Right ventricle myocardium inferior (tissue), 1 donor: ENCODE measurements at regions of chr14 and their contacts with region 1.

Region 1: DNA sequence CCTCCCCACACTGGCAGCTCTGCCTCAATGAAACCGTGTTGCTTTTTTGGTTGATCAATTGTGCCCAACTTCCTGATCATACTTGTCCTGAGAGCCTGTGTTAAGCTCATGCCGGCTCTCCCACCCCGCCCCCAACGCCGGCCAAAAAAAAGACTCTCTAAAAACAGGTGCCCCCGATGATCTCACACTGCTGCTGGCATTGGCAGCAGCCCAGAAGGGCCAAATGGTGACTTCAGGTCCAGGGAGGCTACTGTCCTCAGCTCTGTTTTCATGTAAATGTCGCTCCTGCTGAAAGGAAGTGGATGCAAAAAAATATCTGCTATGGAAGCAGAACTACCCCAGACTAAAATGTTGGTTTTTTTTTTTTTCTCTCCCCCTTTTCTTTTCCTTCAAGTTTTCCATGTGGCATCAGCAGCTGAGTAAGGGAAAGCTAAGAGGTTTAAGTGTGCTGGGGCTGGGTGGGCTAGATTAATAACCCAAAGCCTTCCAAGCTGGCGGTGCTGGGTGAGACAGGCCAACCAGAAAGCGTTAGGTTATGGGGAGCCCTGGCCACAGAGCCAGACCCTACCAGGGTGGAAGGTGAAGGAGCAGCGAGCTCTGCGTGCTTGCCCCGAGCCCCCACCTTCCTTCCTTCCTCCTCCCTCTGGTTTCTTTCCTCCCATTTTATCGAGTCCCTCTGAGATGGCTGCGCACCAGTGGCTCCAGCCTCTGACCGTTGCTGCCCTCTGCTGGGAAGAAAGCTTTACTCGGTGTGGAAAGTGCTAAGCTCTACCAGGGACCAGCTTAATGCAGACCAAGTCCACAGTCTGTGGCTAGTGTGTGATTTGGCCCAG is 396.1 kb downstream of the NRXN3 start:
- DNase-seq: peak; percentile 66
- ATAC-seq: peak; percentile 85

Region 2: DNA sequence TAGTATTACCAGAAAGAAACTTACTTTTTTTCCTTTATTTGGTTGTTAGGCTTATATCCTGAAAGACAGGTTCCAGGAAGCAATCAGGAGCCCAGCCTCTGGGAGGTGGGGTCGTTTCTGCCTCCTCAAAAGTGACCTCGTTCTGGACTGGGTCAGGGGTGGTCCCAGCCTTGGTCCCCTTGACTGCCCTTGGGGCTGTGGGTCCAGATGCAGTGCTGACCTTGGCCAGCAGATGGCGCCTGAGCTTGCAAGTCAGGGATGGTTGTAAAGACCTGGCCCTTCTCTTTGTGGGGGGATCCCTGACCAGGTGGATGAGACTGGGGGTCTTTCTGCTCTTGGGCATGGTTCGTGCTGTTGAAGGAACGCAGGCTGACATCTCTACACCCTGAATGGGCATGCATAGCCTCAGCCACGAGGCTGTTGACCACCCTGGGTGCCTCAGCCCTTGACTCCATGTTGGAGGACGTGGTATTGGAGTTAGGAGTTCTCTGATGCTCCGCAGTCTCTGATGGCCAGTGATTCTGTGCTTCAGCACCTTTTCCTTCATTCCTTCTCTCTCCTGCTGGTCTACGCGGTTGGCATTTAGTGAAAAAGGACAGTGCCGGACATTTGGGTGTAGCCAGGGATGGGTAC is 704.0 kb before region 1 on chr14:
- intact Hi-C with region 1: loop called (anchors 5 kb)
- DNase-seq: peak; percentile 85
- ATAC-seq: peak; percentile 74

Region 3: DNA sequence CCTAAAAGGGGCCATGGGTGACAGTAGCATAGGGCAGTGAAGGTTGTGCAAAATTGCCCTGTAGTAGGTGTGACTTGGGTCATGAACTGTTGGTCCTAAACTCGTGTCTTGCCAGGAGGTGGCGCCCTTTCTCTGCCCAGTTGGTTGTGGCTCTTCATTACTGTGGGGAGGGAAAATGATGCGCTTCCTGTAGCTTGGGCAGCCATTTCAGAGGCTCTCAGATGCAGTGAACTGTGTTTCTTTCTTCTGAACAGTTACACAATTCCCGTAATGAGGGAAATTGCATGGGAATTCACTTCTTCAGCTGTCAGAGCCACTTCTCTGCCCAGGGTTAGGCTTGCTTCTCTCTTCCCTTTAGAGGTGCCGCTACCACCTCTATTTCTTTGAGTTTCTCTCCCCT is 544.2 kb before region 1 on chr14:
- intact Hi-C with region 1: loop called (anchors 10 kb)
- DNase-seq: no peak
- ATAC-seq: no peak

Region 4: DNA sequence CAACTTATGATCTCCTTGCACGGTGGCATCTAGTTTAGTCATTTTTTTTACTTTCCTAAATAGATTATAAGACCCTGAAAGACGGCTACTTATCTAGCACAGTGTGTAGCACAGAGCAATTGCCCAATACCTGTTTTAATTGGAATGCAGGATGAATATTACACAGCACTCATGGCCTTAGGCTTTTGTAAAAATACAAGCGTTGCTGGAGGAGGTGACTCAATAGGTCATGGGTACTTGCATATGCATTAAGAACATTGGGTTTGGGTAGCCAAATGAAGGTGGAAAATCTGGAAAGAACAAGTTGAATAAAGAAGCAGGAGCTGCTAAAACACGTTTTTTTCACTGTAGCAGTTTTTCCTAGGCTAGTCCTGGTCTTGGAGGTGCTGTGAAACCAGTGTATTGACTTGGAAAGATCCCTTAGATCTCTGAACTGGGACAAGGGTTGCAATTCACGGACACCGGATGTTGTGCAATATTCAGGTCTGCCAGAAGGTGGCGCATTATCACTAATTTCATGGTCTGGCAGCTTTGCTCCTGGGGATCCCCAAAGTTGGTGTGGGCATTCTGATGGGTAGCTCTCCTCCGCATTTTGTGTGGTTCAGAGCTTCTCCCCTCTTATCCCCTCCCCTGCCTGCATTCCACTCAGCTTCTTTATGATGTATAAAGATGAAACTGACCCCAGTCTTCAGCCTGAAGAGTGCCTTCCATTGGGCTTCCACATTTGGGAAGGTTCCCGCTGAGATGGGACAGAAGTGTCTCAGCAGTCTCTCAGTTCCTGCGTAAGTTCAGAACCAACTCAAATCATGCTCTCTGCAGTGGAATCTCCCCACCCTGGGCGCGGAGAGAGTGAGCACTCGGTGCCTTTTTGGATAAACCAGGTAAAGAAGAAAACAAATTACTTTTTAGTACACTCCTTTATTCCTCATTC is 117.8 kb before region 1 on chr14:
- intact Hi-C with region 1: loop called (anchors 1 kb)
- DNase-seq: no peak
- ATAC-seq: no peak